Right ventricle myocardium inferior (tissue), 1 donor: ENCODE measurements at regions of chr16 and their contacts with region 1.

Region 1: GRCh38 chr16:64455254-64455653 is 666.6 kb downstream of the CDH11 start:
- DNase-seq: no peak
- ATAC-seq: no peak

Region 2: GRCh38 chr16:64089697-64090096 is 365.6 kb before region 1 on chr16:
- intact Hi-C with region 1: loop called (anchors 5 kb)
- DNase-seq: no peak
- ATAC-seq: no peak

Region 3: DNA sequence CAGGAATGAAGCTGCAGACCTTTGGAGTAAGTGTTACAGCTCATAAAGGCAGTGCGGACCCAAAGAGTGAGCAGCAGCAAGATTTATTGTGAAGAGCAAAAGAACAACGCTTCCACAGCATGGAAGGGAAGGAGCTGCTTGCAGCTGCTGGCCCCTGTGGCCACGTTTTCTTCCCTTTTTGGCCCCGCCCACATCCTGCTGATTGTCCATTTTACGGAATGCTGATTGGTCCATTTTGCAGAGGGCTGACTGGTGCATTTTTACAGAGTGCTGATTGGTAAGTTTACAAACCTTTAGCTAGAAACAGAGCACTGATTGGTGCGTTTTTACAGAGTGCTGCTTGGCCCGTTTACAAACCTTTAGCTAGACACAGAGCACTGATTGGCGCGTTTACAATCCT is 174.9 kb before region 1 on chr16:
- intact Hi-C with region 1: loop called (anchors 10 kb)
- DNase-seq: no peak
- ATAC-seq: no peak